Heart right ventricle (tissue), 16 donors: ENCODE measurements at regions of chr7 and their contacts with region 1.

Region 1: GRCh38 chr7:154186811-154187210 is 134.6 kb downstream of the DPP6 start:
- DNase-seq: no peak
- ATAC-seq: no peak
- H3K4me3 ChIP-seq: no peak overlapping the region
- H3K27ac ChIP-seq: no peak overlapping the region
- H3K4me1 ChIP-seq: no peaks in the 10 kb centered on the region
- H3K27me3 ChIP-seq: peaks cover 0 to 26% (median 9%) of the 10 kb centered on the region in 7 donors
- CTCF ChIP-seq: no peak

Region 2: DNA sequence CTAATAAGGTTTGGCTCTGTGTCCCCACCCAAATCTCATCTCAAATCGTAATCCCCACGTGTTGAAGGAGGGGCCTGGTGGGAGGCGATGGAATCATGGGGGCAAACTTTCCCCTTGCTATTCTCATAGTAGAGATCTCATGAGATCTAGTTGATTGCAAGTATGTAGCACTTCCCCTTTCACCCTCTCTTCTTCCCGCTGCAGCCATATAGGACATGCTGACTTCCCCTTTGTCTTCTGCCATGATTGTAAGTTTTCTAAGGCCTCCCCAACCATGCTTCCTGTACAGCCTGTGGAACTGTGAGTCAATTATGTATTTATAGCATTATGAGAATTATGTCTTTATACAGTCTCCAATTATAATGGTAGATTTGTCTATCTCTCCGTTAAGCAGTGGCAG is 832.7 kb before region 1 on chr7:
- intact Hi-C with region 1: loop called in 1 of 10 experiments (anchors 5 kb)
- DNase-seq: no peak
- ATAC-seq: no peak
- H3K4me3 ChIP-seq: no peak overlapping the region
- H3K27ac ChIP-seq: no peak overlapping the region
- H3K4me1 ChIP-seq: no peaks in the 10 kb centered on the region
- H3K27me3 ChIP-seq: no peaks in the 10 kb centered on the region
- CTCF ChIP-seq: no peak

Region 3: GRCh38 chr7:154302380-154302779 is 115.6 kb after region 1 on chr7:
- intact Hi-C with region 1: no loop called
- DNase-seq: no peak
- ATAC-seq: no peak
- H3K4me3 ChIP-seq: no peak overlapping the region
- H3K27ac ChIP-seq: no peak overlapping the region
- H3K4me1 ChIP-seq: no peaks in the 10 kb centered on the region
- H3K27me3 ChIP-seq: peaks cover 0 to 45% (median 13%) of the 10 kb centered on the region in 7 donors
- CTCF ChIP-seq: no peak